ENCODE measurements at regions of chr12 and their contacts with region 1.

Region 1: DNA sequence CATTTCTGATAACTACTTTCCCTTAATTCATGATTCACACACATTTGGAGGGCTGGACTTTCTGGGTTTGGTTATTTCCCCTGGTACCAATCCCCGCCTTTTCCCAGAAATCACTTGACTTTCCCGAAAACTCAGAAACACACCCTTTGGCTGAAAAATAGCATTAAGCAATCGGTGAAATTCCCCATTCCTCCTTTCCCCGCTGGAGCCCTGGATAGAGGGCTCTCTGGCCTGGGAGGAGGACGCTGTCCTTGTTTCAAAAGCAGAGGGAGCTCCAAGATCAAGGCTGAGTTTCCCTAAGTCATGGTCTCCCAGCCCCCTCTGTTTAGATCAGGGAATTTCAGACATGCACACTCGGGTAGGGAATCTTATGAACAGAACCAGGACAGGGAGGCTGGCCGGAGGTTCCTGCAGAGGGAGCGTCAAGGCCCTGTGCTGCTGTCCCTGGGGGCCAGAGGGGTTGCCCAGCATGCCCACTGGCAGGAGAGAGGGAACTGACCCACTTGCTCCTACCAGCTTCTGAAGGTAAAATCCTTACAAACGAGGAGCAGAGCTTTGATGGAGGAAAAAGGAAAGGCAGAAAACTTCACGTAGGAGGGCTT is at the start of gene C1S:
- DNase-seq: peak in 1 of 2 donors; percentile 99
- H3K4me3 ChIP-seq: peak within 1 kb of the TSS; percentile 44 to 45
- H3K27ac ChIP-seq: peak within 1 kb of the TSS; percentile 93
- H3K4me1 ChIP-seq: peaks cover 28% of the 10 kb centered on the region
- H3K27me3 ChIP-seq: no peaks in the 10 kb centered on the region
- CTCF ChIP-seq: peak; percentile 74 to 94 (median 93)
- POLR2A ChIP-seq: peak in 1 of 2 donors; percentile 86
- total RNA-seq, gene C1S: 541 TPM

Region 2: GRCh38 chr12:7018350-7019042 is 42.0 kb before region 1 on chr12 and contains the start of gene LPCAT3:
- intact Hi-C with region 1: no loop called
- DNase-seq: peak in 1 of 2 donors; percentile 97
- H3K4me3 ChIP-seq: peak within 1 kb of the TSS; percentile 90 to 96
- H3K27ac ChIP-seq: peak within 1 kb of the TSS; percentile 84
- H3K4me1 ChIP-seq: peaks cover 29% of the 10 kb centered on the region
- H3K27me3 ChIP-seq: no peaks in the 10 kb centered on the region
- CTCF ChIP-seq: peak; percentile 67 to 73 (median 70)
- POLR2A ChIP-seq: peak in 1 of 2 donors; percentile 53
- total RNA-seq, gene LPCAT3: 42.0 TPM

Region 3: GRCh38 chr12:7092229-7092985 is 32.0 kb after region 1 on chr12 and contains the start of gene C1R:
- intact Hi-C with region 1: loop called (anchors 1 kb)
- DNase-seq: no peak
- H3K4me3 ChIP-seq: peak within 1 kb of the TSS; percentile 60 to 68
- H3K27ac ChIP-seq: peak within 1 kb of the TSS; percentile 94
- H3K4me1 ChIP-seq: peaks cover 53% of the 10 kb centered on the region
- H3K27me3 ChIP-seq: no peaks in the 10 kb centered on the region
- CTCF ChIP-seq: peak; percentile 80 to 95 (median 89)
- POLR2A ChIP-seq: peak in 1 of 2 donors; percentile 81
- total RNA-seq, gene C1R: 830 TPM

Region 4: DNA sequence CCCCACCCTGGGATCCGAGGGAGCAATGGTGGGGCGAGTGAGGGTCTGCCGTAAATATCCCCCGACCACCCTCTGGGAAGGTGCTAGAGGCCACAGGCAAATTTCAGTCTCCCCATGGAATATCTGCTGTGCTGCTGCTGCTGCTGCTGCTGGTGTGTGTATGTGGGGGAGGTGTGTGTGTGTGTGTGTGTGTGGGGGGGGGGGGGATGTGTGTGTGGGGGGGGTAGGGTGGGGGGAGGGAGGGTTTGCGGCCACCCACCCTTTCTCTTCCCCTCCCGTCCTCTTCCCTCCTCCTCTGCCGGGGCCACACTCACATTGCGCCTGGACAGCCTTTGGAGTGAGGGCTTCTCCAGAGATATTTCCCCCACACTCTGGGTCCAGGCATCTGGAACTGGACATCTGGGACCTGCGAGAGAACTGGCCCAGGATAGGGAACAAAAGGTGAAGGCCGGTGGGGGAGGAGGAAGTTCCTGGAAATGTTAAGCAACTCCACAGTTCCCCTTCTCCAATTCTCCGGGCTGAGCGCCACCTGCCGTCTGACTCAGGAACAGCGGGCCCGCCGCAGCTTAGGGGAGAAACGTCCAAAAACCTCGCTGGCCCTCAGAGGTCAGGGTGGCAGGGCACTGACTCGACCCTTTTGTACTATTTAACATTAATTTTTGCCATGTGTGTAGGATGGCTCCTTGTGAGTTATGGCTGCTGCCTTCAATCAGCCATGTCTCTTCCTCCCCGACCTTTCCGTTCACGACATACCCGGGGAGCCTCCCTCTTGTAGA is 48.5 kb after region 1 on chr12 and contains the start of gene C1RL:
- intact Hi-C with region 1: loop called (anchors 2 kb)
- DNase-seq: peak in 1 of 2 donors; percentile 97
- H3K4me3 ChIP-seq: peak within 1 kb of the TSS; percentile 50 to 62
- H3K27ac ChIP-seq: peak within 1 kb of the TSS; percentile 96
- H3K4me1 ChIP-seq: peaks cover 36% of the 10 kb centered on the region
- H3K27me3 ChIP-seq: no peaks in the 10 kb centered on the region
- CTCF ChIP-seq: peak; percentile 95 to 99 (median 96)
- POLR2A ChIP-seq: peak in 1 of 2 donors; percentile 67
- total RNA-seq, gene C1RL: 122 TPM